Common myeloid progenitor, CD34-positive (primary cell): ENCODE measurements at regions of chr2 and their contacts with region 1.

Region 1: GRCh38 chr2:74440378-74441169 is 1.2 kb downstream of the RTKN start:
- DNase-seq: peak; percentile 71 to 88 (median 83)
- H3K4me3 ChIP-seq: peak overlapping the region; percentile 2 to 84 (median 71)
- H3K27ac ChIP-seq: no peak overlapping the region
- H3K4me1 ChIP-seq: peaks cover 4 to 51% (median 44%) of the 10 kb centered on the region in 4 experiments
- H3K27me3 ChIP-seq: peaks cover 0 to 27% (median 10%) of the 10 kb centered on the region in 5 experiments

Region 2: GRCh38 chr2:74130163-74130995 is 310.2 kb before region 1 on chr2:
- CTCF ChIA-PET with region 1: no interaction called
- POLR2A ChIA-PET with region 1: no interaction called
- DNase-seq: peak in 1 of 3 donors; percentile 35
- H3K4me3 ChIP-seq: no peak overlapping the region
- H3K27ac ChIP-seq: no peak overlapping the region
- H3K4me1 ChIP-seq: no peaks in the 10 kb centered on the region
- H3K27me3 ChIP-seq: peaks cover 0 to 14% (median 6%) of the 10 kb centered on the region in 5 experiments

Region 3: GRCh38 chr2:74328074-74328473 is 112.5 kb before region 1 on chr2:
- CTCF ChIA-PET with region 1: no interaction called
- POLR2A ChIA-PET with region 1: no interaction called
- DNase-seq: no peak
- H3K4me3 ChIP-seq: no peak overlapping the region
- H3K27ac ChIP-seq: no peak overlapping the region
- H3K4me1 ChIP-seq: no peaks in the 10 kb centered on the region
- H3K27me3 ChIP-seq: no peaks in the 10 kb centered on the region

Region 4: GRCh38 chr2:74429487-74430451 is 10.8 kb before region 1 on chr2:
- CTCF ChIA-PET with region 1: interaction called, 16 read pairs
- POLR2A ChIA-PET with region 1: interaction called, 3 read pairs
- DNase-seq: no peak
- H3K4me3 ChIP-seq: no peak overlapping the region
- H3K27ac ChIP-seq: no peak overlapping the region
- H3K4me1 ChIP-seq: peaks cover 0 to 4% (median 3%) of the 10 kb centered on the region in 4 experiments
- H3K27me3 ChIP-seq: no peaks in the 10 kb centered on the region